CD8-positive, alpha-beta T cell (primary cell): ENCODE measurements at regions of chr11 and their contacts with region 1.

Region 1: GRCh38 chr11:114180301-114181055 is 115.7 kb upstream of the NNMT start:
- DNase-seq: peak in 4 of 9 experiments; percentile 39 to 59 (median 50)
- ATAC-seq: no peak
- H3K4me3 ChIP-seq: no peak overlapping the region
- H3K4me3 Mint-ChIP-seq: peak overlapping the region; percentile 12
- H3K27ac ChIP-seq: no peak overlapping the region
- H3K27ac Mint-ChIP-seq: peak overlapping the region; percentile 46
- H3K4me1 ChIP-seq: peaks cover 64% of the 10 kb centered on the region
- H3K4me1 Mint-ChIP-seq: peaks cover 77% of the 10 kb centered on the region
- H3K27me3 ChIP-seq: no peaks in the 10 kb centered on the region
- H3K27me3 Mint-ChIP-seq: no peaks in the 10 kb centered on the region
- CTCF ChIP-seq: peak; percentile 36

Region 2: DNA sequence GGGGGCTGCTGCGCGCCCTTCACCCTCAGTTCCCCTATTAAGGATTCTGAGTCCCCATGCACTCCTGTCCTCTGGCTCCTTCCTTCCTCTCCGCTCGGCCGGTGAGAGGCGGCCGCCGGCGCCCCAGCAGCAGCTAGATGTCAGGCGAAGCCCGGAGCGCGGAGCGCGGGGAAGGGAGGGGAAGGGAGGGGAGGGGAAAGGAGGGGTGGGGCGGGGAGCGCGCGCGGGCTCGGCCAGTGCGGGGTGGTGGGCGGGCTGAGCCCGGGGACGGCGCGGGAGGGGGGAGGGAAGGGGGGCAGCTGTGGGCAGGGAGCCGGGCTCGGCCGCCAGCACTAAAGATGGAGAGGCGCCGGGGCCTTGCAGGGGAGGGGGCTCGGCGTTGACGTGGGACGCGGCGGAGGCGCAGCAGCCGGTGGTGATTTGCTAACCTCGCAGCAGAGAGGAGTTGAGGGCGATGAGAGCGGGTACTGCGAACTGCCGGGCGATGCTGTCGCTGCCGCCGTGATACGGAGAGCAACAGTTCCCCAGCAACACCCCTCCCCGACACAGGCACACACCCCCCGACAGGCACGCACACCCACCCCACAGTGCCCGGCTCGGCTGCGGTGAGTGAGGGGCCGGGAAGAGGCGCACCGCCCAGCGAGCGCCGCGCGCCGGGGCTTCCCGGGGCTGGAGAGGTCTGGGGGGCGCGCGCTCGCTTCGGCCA is 121.0 kb before region 1 on chr11 and contains the start of gene ZBTB16:
- CTCF ChIA-PET with region 1: interaction called, 27 read pairs
- POLR2A ChIA-PET with region 1: interaction called, 12 read pairs
- intact Hi-C with region 1: loop called (anchors 5 kb)
- DNase-seq: peak in 8 of 9 experiments; percentile 50 to 79 (median 64)
- ATAC-seq: peak; percentile 67
- H3K4me3 ChIP-seq: peak within 1 kb of the TSS; percentile 56 to 70
- H3K4me3 Mint-ChIP-seq: peak within 1 kb of the TSS; percentile 89
- H3K27ac ChIP-seq: peak within 1 kb of the TSS in 1 of 2 experiments; percentile 31
- H3K27ac Mint-ChIP-seq: peak within 1 kb of the TSS; percentile 79
- H3K4me1 ChIP-seq: peaks cover 21% of the 10 kb centered on the region
- H3K4me1 Mint-ChIP-seq: peaks cover 9% of the 10 kb centered on the region
- H3K27me3 ChIP-seq: peaks cover 3 to 14% of the 10 kb centered on the region in 2 experiments
- H3K27me3 Mint-ChIP-seq: peaks cover 21% of the 10 kb centered on the region
- CTCF ChIP-seq: no peak
- total RNA-seq, gene ZBTB16: 15.3 to 18.3 TPM

Region 3: GRCh38 chr11:114135737-114136151 is 44.7 kb before region 1 on chr11:
- CTCF ChIA-PET with region 1: interaction called, 5 read pairs
- POLR2A ChIA-PET with region 1: no interaction called
- intact Hi-C with region 1: loop called in 1 of 2 experiments (anchors 5 kb)
- DNase-seq: peak in 1 of 9 experiments; percentile 20
- ATAC-seq: no peak
- H3K4me3 ChIP-seq: no peak overlapping the region
- H3K4me3 Mint-ChIP-seq: no peak overlapping the region
- H3K27ac ChIP-seq: no peak overlapping the region
- H3K27ac Mint-ChIP-seq: no peak overlapping the region
- H3K4me1 ChIP-seq: no peaks in the 10 kb centered on the region
- H3K4me1 Mint-ChIP-seq: peaks cover 53% of the 10 kb centered on the region
- H3K27me3 ChIP-seq: no peaks in the 10 kb centered on the region
- H3K27me3 Mint-ChIP-seq: no peaks in the 10 kb centered on the region
- CTCF ChIP-seq: no peak

Region 4: DNA sequence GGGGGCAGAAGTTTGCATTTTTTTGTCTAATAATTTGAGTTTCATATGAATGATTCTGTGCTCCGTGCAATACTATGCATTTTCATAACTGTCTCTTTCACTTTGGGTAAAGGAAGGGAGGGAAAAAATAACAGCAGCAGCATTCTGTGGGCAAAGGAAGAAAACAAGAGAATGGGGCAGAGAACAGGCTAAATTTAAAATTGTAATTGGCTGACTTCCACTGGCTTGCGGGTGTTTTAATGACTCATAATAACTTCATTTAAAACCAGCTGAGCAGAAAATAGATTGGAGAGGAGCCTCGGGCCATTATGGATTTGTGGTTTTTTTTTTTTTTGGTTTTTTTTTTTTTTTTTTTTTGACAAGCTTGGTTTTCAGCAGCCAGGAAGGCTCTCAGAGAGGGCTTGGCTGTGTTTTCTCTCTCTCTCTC is 13.6 kb before region 1 on chr11:
- CTCF ChIA-PET with region 1: interaction called, 25 read pairs
- POLR2A ChIA-PET with region 1: interaction called, 103 read pairs
- intact Hi-C with region 1: loop called in 1 of 2 experiments (anchors 2 kb)
- DNase-seq: peak in 2 of 9 experiments; percentile 62 to 74
- ATAC-seq: peak; percentile 45
- H3K4me3 ChIP-seq: no peak overlapping the region
- H3K4me3 Mint-ChIP-seq: peak overlapping the region; percentile 64
- H3K27ac ChIP-seq: no peak overlapping the region
- H3K27ac Mint-ChIP-seq: peak overlapping the region; percentile 77
- H3K4me1 ChIP-seq: peaks cover 84% of the 10 kb centered on the region
- H3K4me1 Mint-ChIP-seq: peaks cover 97% of the 10 kb centered on the region
- H3K27me3 ChIP-seq: no peaks in the 10 kb centered on the region
- H3K27me3 Mint-ChIP-seq: no peaks in the 10 kb centered on the region
- CTCF ChIP-seq: no peak

Region 5: DNA sequence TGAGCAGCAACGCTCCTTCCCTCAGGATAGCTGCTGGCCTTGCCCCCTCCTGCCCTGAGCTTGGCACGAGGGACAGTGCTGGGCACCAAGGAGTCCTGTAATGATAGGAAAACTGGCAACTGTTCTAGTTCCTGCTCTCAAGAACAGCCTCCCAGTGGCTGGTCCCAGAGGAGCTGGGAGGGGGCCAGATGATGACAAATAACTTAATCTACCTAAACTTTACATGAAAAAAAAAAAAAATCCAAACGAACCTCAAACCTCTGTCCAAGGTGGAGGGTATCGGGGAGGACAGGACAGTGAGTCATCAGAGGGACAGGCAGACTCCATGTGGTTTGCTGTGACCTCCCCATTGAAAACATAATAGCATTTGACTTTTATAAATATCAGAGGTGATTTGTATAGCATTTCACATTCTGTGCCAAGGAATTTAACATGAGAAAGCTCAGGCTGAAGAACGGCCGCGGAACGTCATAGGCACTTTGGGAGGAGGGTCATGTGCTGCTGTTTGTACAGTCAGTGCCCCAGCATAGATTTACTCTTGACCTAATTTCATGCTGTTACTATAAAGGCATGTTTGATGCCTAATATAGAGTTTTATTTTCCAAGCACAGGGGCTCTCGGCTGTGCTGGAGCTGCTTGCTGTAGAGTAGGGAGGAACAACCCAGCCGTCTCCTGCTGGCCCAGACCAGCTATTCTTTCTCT is 17.5 kb after region 1 on chr11:
- CTCF ChIA-PET with region 1: interaction called, 83 read pairs
- POLR2A ChIA-PET with region 1: interaction called, 26 read pairs
- intact Hi-C with region 1: no loop called
- DNase-seq: no peak
- ATAC-seq: no peak
- H3K4me3 ChIP-seq: no peak overlapping the region
- H3K4me3 Mint-ChIP-seq: no peak overlapping the region
- H3K27ac ChIP-seq: no peak overlapping the region
- H3K27ac Mint-ChIP-seq: peak overlapping the region; percentile 22
- H3K4me1 ChIP-seq: no peaks in the 10 kb centered on the region
- H3K4me1 Mint-ChIP-seq: peaks cover 24% of the 10 kb centered on the region
- H3K27me3 ChIP-seq: no peaks in the 10 kb centered on the region
- H3K27me3 Mint-ChIP-seq: no peaks in the 10 kb centered on the region
- CTCF ChIP-seq: no peak